ENCODE measurements at regions of chr2 and their contacts with region 1.

Region 1: GRCh38 chr2:128520791-128521190 is 202.1 kb upstream of the HS6ST1 start:
- DNase-seq: peak; percentile 57
- H3K4me3 Mint-ChIP-seq: no peak overlapping the region
- H3K27ac Mint-ChIP-seq: peak overlapping the region; percentile 48
- H3K4me1 Mint-ChIP-seq: peaks cover 23% of the 10 kb centered on the region
- H3K27me3 Mint-ChIP-seq: peaks cover 4% of the 10 kb centered on the region

Region 2: GRCh38 chr2:128250229-128251025 is 270.4 kb before region 1 on chr2:
- intact Hi-C with region 1: loop called (anchors 5 kb)
- DNase-seq: no peak
- H3K4me3 Mint-ChIP-seq: no peak overlapping the region
- H3K27ac Mint-ChIP-seq: no peak overlapping the region
- H3K4me1 Mint-ChIP-seq: no peaks in the 10 kb centered on the region
- H3K27me3 Mint-ChIP-seq: peaks cover 5% of the 10 kb centered on the region

Region 3: GRCh38 chr2:128473175-128474035 is 47.4 kb before region 1 on chr2:
- intact Hi-C with region 1: loop called (anchors 1 kb)
- DNase-seq: peak; percentile 26
- H3K4me3 Mint-ChIP-seq: peak overlapping the region; percentile 67
- H3K27ac Mint-ChIP-seq: peak overlapping the region; percentile 86
- H3K4me1 Mint-ChIP-seq: peaks cover 20% of the 10 kb centered on the region
- H3K27me3 Mint-ChIP-seq: peaks cover 6% of the 10 kb centered on the region

Region 4: GRCh38 chr2:128485761-128486639 is 34.8 kb before region 1 on chr2:
- intact Hi-C with region 1: no loop called
- DNase-seq: no peak
- H3K4me3 Mint-ChIP-seq: no peak overlapping the region
- H3K27ac Mint-ChIP-seq: no peak overlapping the region
- H3K4me1 Mint-ChIP-seq: no peaks in the 10 kb centered on the region
- H3K27me3 Mint-ChIP-seq: peaks cover 18% of the 10 kb centered on the region

Region 5: DNA sequence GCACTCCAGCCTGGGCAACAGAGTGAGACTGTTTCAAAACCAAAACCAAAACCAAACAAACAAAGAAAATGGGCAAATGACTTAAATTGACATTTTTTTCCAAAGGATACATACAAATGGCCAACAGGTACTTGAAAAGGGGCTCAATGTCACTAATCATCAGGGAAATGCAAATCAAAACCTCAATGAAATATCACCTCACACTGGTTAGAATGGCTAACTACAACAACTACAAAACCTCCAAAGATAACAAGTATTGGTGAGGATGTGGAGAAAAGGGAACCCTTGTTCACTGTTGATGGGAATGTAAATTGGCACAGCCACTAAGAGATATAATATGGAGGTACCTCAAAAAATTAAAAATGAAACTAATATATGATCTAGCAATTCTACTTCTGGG is 11.1 kb after region 1 on chr2:
- intact Hi-C with region 1: loop called (anchors 1 kb)
- DNase-seq: no peak
- H3K4me3 Mint-ChIP-seq: no peak overlapping the region
- H3K27ac Mint-ChIP-seq: no peak overlapping the region
- H3K4me1 Mint-ChIP-seq: peaks cover 28% of the 10 kb centered on the region
- H3K27me3 Mint-ChIP-seq: peaks cover 15% of the 10 kb centered on the region

Region 6: DNA sequence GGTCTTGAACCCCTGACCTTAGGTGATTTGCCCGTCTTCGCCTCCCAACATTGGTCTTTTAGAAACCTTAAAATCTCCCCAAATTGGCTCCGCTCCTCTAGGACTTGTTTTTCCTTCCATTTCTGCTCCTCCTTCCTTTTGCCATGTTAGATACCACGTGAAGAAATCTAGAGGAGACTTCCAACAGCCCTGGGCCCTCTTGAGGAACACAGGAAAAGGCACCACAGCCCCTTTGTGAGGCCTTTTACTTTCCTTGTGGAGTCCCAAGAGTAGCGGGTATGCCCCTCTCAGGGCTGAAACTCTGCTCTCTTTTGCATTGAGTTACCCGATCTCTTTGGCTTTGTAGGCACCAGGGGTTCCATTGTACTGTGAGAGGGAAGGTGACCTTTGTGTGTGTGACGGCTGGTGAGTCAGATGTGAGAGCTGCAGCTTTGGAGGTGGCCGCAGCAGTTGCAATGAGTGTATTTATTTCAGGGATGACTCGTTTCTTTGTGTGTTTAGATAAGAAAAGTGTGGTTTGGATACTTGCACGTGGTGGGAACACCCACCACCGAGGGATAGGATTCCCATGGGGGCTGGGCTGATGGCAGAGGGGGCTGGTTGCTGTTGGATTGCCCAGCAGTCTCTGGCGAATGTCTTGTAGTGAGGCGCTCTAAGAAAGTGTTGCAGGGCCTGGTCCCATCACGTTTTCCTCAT is 16.3 kb after region 1 on chr2:
- intact Hi-C with region 1: loop called (anchors 1 kb)
- DNase-seq: no peak
- H3K4me3 Mint-ChIP-seq: no peak overlapping the region
- H3K27ac Mint-ChIP-seq: peak overlapping the region; percentile 4
- H3K4me1 Mint-ChIP-seq: peaks cover 24% of the 10 kb centered on the region
- H3K27me3 Mint-ChIP-seq: peaks cover 22% of the 10 kb centered on the region

Region 7: DNA sequence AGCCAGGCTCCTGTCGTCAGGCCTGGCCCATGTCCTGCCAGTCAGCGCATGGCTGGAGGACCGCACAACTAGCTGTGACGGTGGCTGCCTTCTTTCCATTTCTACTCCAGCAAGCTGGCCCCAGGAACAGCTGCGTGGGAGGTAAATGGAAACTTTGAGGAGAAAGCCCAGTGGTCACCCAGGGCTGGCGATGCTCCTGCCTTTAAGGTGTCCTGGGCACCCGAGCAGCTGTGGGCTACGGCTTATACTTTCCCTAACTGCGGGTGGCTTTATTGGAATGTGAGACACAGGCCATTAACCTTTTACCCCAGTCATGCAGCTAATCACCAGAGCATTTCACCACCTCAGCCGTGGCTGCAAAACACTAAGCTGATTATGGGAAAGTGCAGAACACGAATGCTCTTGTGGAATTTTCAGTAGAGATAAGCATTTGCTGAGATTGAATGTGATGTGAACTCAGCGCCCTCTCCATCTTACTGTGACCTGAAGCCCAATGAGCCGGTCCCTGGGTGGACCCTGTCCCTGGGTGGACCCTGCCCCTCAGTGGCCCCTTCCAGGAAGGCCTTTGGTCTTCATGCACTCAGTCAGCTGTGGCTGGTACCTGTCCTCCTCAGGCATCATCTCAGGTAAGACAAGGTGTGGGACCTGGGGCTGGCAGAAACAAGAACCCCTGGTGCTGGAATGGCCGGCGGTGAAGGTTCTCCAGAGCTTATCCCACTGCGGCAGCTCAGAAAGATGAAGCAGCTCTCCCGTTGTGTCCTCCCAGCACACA is 73.3 kb after region 1 on chr2:
- intact Hi-C with region 1: no loop called
- DNase-seq: no peak
- H3K4me3 Mint-ChIP-seq: no peak overlapping the region
- H3K27ac Mint-ChIP-seq: no peak overlapping the region
- H3K4me1 Mint-ChIP-seq: no peaks in the 10 kb centered on the region
- H3K27me3 Mint-ChIP-seq: peaks cover 9% of the 10 kb centered on the region

Region 8: DNA sequence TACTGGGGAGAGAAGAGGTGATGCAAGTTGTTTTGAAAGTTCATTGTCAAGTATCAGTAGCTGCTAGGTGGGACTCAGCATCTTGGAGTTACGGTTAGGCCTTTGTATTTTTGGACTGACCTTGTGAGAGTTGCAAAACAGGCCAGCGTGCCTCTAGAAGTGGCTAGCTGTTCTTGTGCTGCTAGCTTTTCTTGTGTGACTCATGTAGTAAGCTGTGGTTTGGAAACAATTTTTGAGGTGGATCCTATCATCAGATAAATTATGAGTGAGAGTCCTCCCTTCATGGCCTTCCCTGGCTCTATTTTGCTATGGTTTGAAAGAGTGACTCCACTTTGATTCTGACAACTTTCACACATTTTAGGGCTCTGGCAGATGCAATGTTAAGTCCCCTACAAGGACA is 207.1 kb after region 1 on chr2:
- intact Hi-C with region 1: loop called (anchors 1 kb)
- DNase-seq: no peak
- H3K4me3 Mint-ChIP-seq: no peak overlapping the region
- H3K27ac Mint-ChIP-seq: peak overlapping the region; percentile 14
- H3K4me1 Mint-ChIP-seq: peaks cover 26% of the 10 kb centered on the region
- H3K27me3 Mint-ChIP-seq: peaks cover 16% of the 10 kb centered on the region

Region 9: DNA sequence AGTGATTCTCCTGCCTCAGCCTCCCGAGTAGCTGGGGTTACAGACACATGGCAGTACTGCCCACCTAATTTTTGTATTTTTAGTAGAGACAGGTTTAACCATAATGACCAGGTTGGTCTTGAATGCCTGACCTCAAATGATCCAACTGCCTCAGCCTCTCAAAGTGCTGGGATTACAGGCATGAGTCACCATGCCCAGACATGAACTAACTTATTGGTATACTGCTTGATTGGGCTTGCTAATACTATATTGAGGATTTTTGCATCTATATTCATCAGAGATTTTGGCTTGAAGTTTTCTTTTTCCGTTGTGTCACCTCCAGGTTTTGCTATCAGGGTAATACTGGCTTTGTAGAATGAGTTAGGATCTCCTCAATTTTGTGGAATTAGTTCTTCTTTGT is 504.0 kb after region 1 on chr2:
- intact Hi-C with region 1: no loop called
- DNase-seq: no peak
- H3K4me3 Mint-ChIP-seq: no peak overlapping the region
- H3K27ac Mint-ChIP-seq: no peak overlapping the region
- H3K4me1 Mint-ChIP-seq: no peaks in the 10 kb centered on the region
- H3K27me3 Mint-ChIP-seq: no peaks in the 10 kb centered on the region

Region 10: GRCh38 chr2:129237966-129238725 is 717.4 kb after region 1 on chr2:
- intact Hi-C with region 1: no loop called
- DNase-seq: no peak
- H3K4me3 Mint-ChIP-seq: no peak overlapping the region
- H3K27ac Mint-ChIP-seq: no peak overlapping the region
- H3K4me1 Mint-ChIP-seq: no peaks in the 10 kb centered on the region
- H3K27me3 Mint-ChIP-seq: no peaks in the 10 kb centered on the region